ENCODE measurements at regions of chr2 and their contacts with region 1.

Region 1: DNA sequence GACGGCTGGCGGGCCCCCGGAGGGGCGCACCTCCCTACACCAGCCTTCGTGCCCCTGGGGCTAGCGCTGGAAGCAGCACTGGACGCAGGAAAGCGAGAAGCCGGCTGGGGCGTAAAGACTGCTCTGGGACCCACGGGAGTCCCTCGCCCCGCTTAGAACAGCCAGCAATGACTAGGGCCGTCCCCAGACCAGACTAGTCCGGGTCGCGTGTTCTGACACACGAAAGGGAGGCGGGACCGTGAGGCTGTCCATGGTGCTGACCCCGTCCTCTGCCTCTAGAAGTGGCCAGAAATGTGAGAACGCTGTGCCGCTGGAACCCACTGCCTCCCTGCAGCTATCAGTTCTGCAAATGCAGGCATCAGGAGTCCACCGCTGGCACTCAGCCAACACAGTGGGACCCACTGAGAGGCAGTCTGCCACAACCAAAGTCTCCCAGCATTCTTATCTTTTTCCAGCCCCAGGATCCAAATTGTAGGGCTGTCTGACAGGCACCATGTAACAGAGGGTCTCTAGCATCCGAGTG is at the start of gene UCN:
- DNase-seq: peak; percentile 52
- H3K4me3 ChIP-seq: peak within 1 kb of the TSS; percentile 34
- H3K27ac ChIP-seq: no peak within 1 kb of the TSS
- H3K4me1 ChIP-seq: peaks cover 15% of the 10 kb centered on the region
- H3K27me3 ChIP-seq: peaks cover 23% of the 10 kb centered on the region
- CTCF ChIP-seq: no peak
- total RNA-seq, gene UCN: 0.64 and 0.68 TPM in 2 replicates

Region 2: DNA sequence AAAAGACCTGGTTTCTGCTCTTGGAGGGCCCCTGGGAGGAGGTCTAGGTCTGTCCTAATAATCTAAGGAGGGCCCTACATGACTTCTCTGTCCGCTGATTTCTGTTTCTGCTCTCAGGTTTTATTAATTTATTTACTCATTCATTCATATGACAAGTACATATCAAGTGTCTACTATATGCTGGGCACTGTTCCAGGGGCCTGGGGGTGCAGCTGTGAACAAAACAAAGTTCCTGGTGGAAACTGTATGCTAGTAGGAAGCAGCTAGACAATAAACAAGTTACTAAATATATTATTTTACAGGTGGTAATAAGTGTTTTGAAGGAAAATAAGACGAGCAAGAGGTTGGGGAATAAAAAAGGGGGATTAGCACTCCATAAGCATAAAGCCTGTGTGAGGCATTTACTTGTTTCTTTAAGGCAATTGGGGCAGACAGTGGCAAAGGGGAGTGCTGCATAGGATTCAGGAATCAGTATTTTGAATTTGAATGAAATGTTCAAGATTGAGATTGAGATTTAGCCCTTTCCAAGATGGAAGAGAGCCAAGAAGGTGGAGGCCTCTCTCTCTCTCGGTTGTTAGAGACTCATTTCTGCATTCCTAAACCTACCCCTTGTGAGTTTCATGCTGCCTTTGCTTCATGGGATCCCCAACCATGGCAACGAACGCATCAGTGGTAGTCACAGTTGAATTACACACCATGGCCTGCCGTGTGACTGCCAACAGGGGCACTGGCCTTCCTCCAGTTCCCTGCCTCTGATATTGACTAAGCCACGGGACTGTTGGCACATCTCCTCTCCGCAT is 878.4 kb before region 1 on chr2:
- CTCF ChIA-PET with region 1: no interaction called
- POLR2A ChIA-PET with region 1: no interaction called
- intact Hi-C with region 1: no loop called
- DNase-seq: no peak
- H3K4me3 ChIP-seq: no peak overlapping the region
- H3K27ac ChIP-seq: no peak overlapping the region
- H3K4me1 ChIP-seq: no peaks in the 10 kb centered on the region
- H3K27me3 ChIP-seq: no peaks in the 10 kb centered on the region
- CTCF ChIP-seq: no peak

Region 3: DNA sequence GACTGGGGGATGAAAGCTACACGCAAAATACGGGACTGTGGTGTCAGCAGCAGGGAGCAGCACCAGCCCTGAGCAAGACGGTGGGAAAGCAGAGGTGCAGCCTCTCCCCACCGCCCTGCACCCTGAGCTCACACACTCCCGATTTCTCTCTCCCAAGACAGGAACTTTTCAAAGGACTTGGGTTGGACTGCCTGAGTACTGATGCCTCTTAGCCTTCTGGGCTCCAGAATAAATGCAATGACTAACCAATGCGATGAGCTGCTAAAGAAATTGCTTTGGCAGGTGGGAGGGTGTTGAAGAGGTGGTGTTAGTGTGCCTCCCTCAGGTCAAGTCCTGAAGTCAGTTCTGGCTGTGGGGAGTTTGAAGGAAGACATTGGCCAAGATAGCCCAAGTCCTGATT is 16.6 kb before region 1 on chr2:
- CTCF ChIA-PET with region 1: interaction called, 16 read pairs
- POLR2A ChIA-PET with region 1: no interaction called
- intact Hi-C with region 1: no loop called
- DNase-seq: no peak
- H3K4me3 ChIP-seq: no peak overlapping the region
- H3K27ac ChIP-seq: no peak overlapping the region
- H3K4me1 ChIP-seq: peaks cover 16% of the 10 kb centered on the region
- H3K27me3 ChIP-seq: no peaks in the 10 kb centered on the region
- CTCF ChIP-seq: no peak; the same call in 1 of the 2 replicates